ENCODE measurements at regions of chr12 and their contacts with region 1.

Region 1: DNA sequence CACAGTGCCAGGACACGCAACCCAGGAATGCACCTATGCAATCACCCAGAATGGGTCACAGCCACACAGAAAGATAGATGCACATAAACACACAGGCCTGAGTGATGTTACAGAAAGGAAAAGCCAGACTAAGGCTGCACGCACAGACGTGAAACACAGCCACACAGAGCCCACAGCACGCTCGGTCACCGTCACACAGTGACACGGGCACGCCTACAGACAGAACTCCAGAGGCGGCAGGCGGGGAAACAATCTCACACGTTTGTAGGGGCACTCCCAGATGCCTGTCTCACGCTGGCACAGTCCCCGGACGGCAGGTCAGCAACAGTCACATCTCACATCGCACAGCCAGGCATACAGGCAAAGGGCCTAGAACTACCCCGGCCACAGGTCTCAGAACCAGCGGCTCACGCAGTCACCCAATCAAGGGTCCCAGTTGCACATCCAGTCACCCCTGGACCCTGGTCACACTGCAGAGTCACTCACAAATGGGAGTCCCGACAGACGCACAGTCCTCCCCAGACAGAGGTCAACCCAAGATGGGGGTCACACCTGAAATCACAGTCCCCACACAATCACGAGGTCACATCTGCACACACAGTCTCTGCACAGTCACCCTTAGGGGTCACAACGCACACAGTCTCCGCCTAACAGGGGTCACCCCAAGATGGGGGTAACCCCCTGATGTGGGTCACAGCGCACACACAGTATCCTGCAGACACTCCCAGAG is 790 bp downstream of the SSH1 start:
- DNase-seq: peak; percentile 88 to 90
- ATAC-seq: peak; percentile 42
- H3K4me3 ChIP-seq: peak overlapping the region; percentile 79 to 87
- H3K27ac ChIP-seq: peak overlapping the region; percentile 83 to 94
- H3K4me1 ChIP-seq: peaks cover 0 to 3% of the 10 kb centered on the region in 2 donors
- H3K27me3 ChIP-seq: no peaks in the 10 kb centered on the region

Region 2: DNA sequence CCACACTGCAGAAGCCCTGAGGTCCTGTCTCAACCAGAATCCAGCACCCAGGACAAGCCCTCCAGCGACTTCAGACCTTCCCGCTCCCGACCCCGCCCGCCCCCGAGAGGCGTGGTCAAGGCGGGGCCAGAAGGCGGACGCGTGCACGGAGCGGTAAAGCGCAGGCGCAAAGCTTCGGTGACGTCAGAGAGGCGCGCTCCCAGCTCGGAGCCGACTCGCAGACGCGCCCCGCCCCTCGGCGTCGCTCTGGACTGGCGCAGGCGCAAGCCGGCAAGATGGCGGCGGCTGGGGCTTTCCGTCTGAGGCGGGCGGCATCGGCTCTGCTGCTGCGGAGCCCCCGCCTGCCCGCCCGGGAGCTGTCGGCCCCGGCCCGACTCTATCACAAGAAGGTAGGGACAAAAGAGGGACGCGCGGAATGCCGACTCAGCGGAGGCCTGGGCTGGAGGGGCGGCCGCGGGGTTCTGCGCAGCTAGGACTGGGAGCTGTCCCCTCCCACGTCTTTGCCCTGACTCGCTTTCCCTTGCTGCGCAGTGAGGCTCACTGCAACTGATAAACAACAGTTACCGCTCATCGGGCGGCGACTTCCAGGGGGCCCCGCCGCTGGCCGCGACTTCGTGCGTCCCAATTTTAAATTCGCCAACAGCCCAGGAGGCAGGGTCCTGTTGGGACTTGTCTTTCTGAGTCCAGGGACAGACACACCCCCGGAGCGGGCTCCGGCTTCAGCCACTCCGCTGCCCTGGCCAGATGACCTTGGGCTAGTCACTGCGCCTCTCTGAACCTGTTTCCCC is 294.1 kb before region 1 on chr12 and contains the start of gene ISCU:
- intact Hi-C with region 1: loop called (anchors 2 to 10 kb)
- DNase-seq: peak; percentile 99 to 100
- ATAC-seq: peak; percentile 95
- H3K4me3 ChIP-seq: peak within 1 kb of the TSS; percentile 60 to 88
- H3K27ac ChIP-seq: peak within 1 kb of the TSS in 1 of 2 donors; percentile 87
- H3K4me1 ChIP-seq: peaks cover 0 to 9% of the 10 kb centered on the region in 2 donors
- H3K27me3 ChIP-seq: no peaks in the 10 kb centered on the region
- total RNA-seq, gene ISCU: 129 to 144 TPM

Region 3: GRCh38 chr12:108833355-108833733 is 23.2 kb before region 1 on chr12:
- intact Hi-C with region 1: loop called in 1 of 2 experiments (anchors 2 kb)
- DNase-seq: peak; percentile 82 to 92
- ATAC-seq: peak; percentile 72
- H3K4me3 ChIP-seq: no peak overlapping the region
- H3K27ac ChIP-seq: peak overlapping the region; percentile 92 to 100
- H3K4me1 ChIP-seq: peaks cover 6 to 14% of the 10 kb centered on the region in 2 donors
- H3K27me3 ChIP-seq: no peaks in the 10 kb centered on the region

Region 4: GRCh38 chr12:108838194-108839017 is 18.2 kb before region 1 on chr12:
- intact Hi-C with region 1: loop called (anchors 1 to 2 kb)
- DNase-seq: peak; percentile 96
- ATAC-seq: peak; percentile 93
- H3K4me3 ChIP-seq: no peak overlapping the region
- H3K27ac ChIP-seq: peak overlapping the region; percentile 96 to 100
- H3K4me1 ChIP-seq: peaks cover 0 to 9% of the 10 kb centered on the region in 2 donors
- H3K27me3 ChIP-seq: no peaks in the 10 kb centered on the region

Measured in aorta (tissue), 5 donors.